ENCODE measurements at regions of chr2 and their contacts with region 1.

Region 1: GRCh38 chr2:58054264-58054663 is 7.7 kb downstream of the VRK2 start:
- DNase-seq: no peak
- ATAC-seq: no peak
- H3K4me3 ChIP-seq: no peak overlapping the region
- H3K27ac ChIP-seq: no peak overlapping the region
- H3K4me1 ChIP-seq: peaks cover 0 to 26% (median 5%) of the 10 kb centered on the region in 12 donors
- H3K27me3 ChIP-seq: no peaks in the 10 kb centered on the region
- CTCF ChIP-seq: no peak
- POLR2A ChIP-seq: no peak

Region 2: DNA sequence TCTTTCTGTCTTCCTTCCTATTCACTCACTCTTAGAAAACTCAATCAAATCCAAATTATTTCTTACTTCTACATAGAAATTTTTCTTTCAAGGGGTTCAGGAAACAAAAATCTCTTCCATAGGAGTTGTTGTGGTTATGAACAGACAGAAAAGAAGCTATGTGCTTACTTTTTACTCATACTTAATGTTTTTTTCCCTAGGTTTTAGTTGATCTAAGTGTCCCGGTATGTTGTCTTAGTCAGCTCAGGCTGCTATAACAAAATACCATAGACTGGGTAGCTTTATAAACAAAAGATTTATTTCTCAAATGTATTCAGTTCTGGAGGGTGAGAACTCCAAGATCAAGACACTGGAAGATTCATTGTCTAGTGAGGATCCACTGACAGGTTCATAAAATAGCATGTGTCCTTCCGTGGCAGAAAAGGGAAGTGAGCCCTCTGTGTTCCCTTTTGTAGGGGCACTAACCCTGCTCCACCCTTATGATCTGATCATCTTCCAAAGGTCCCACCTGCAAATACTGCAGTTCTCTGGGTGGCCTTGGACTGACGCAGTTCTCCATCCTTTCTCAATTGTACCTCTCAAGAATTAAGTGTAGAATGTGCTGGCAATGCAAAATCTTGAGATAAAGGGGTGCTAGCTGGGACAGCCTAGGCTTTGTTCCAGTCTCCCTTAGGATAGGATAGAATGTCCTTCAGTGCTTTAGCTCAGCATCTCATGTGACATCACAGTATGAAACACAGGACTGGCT is 22.1 kb before region 1 on chr2:
- intact Hi-C with region 1: no loop called
- DNase-seq: no peak
- ATAC-seq: peak in 2 of 4 donors; percentile 30 to 68
- H3K4me3 ChIP-seq: no peak overlapping the region
- H3K27ac ChIP-seq: no peak overlapping the region
- H3K4me1 ChIP-seq: no peaks in the 10 kb centered on the region
- H3K27me3 ChIP-seq: no peaks in the 10 kb centered on the region
- CTCF ChIP-seq: no peak
- POLR2A ChIP-seq: no peak

Region 3: GRCh38 chr2:58146707-58147106 is 92.4 kb after region 1 on chr2:
- intact Hi-C with region 1: loop called in 1 of 10 experiments (anchors 10 kb)
- DNase-seq: no peak
- ATAC-seq: no peak
- H3K4me3 ChIP-seq: no peak overlapping the region
- H3K27ac ChIP-seq: no peak overlapping the region
- H3K4me1 ChIP-seq: no peaks in the 10 kb centered on the region
- H3K27me3 ChIP-seq: no peaks in the 10 kb centered on the region
- CTCF ChIP-seq: no peak
- POLR2A ChIP-seq: no peak

Region 4: GRCh38 chr2:58240670-58241545 is 186.6 kb after region 1 on chr2 and contains the start of gene FANCL:
- intact Hi-C with region 1: loop called in 3 of 10 experiments (anchors 5 to 10 kb)
- DNase-seq: peak; percentile 89 to 95 (median 93)
- ATAC-seq: peak; percentile 95 to 99 (median 98)
- H3K4me3 ChIP-seq: peak within 1 kb of the TSS; percentile 66 to 96 (median 88)
- H3K27ac ChIP-seq: peak within 1 kb of the TSS; percentile 59 to 86 (median 81)
- H3K4me1 ChIP-seq: peaks cover 0 to 22% (median 9%) of the 10 kb centered on the region in 12 donors
- H3K27me3 ChIP-seq: no peaks in the 10 kb centered on the region
- CTCF ChIP-seq: peak in 1 of 12 donors; percentile 6
- POLR2A ChIP-seq: peak in 1 of 2 donors; percentile 59
- total RNA-seq, gene FANCL: 6.3 to 17.5 (median 10.1) TPM